GM10248 (cell line): ENCODE measurements at regions of chr12 and their contacts with region 1.

Region 1: GRCh38 chr12:118061011-118061875 is at the start of gene WSB2:
- DNase-seq: peak; percentile 79
- CTCF ChIP-seq: no peak

Region 2: DNA sequence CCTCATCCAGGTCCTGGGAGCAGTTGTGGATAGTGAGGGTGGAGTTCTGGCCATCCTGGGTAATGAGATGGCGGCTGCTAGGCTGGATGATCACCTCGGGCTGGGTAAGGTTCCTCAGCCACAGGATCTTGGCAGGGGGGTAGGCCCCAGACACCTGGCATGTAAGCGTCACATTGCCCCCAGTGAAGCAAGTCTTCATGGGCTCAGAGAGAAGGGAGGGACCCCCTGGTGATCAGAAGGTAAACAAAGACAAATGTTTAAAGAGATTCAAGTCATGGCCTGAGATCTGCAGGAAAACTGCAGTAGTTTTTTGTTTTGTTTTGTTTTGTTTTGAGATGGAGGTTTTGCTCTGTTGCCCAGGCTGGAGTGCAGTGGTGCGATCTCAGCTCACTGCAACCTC is 12.5 kb after region 1 on chr12:
- CTCF ChIA-PET with region 1: interaction called, 73 read pairs
- POLR2A ChIA-PET with region 1: no interaction called
- DNase-seq: no peak
- CTCF ChIP-seq: no peak

Region 3: GRCh38 chr12:118089782-118090181 is 28.5 kb after region 1 on chr12:
- CTCF ChIA-PET with region 1: interaction called, 13 read pairs
- POLR2A ChIA-PET with region 1: no interaction called
- DNase-seq: no peak
- CTCF ChIP-seq: no peak